Caco-2 (cell line): ENCODE measurements at regions of chr12 and their contacts with region 1.

Region 1: GRCh38 chr12:47307680-47308399 is 228.1 kb upstream of the AMIGO2 start:
- DNase-seq: peak; percentile 67 to 71
- H3K4me3 ChIP-seq: no peak overlapping the region
- H3K4me3 Mint-ChIP-seq: no peak overlapping the region
- H3K27ac Mint-ChIP-seq: no peak overlapping the region
- H3K4me1 ChIP-seq: peaks cover 7% of the 10 kb centered on the region
- H3K4me1 Mint-ChIP-seq: peaks cover 23% of the 10 kb centered on the region
- H3K27me3 ChIP-seq: no peaks in the 10 kb centered on the region
- H3K27me3 Mint-ChIP-seq: no peaks in the 10 kb centered on the region
- CTCF ChIP-seq: peak; percentile 71 to 81

Region 2: GRCh38 chr12:46921048-46921763 is 386.6 kb before region 1 on chr12:
- CTCF ChIA-PET with region 1: no interaction called
- POLR2A ChIA-PET with region 1: no interaction called
- intact Hi-C with region 1: no loop called
- DNase-seq: no peak
- H3K4me3 ChIP-seq: no peak overlapping the region
- H3K4me3 Mint-ChIP-seq: no peak overlapping the region
- H3K27ac Mint-ChIP-seq: no peak overlapping the region
- H3K4me1 ChIP-seq: 0 out of 2 replicates have a peak, but pooled peaks cover 5% of the 10 kb centered on the region
- H3K4me1 Mint-ChIP-seq: no peaks in the 10 kb centered on the region
- H3K27me3 ChIP-seq: no peaks in the 10 kb centered on the region
- H3K27me3 Mint-ChIP-seq: peaks cover 5% of the 10 kb centered on the region
- CTCF ChIP-seq: no peak

Region 3: GRCh38 chr12:47079468-47079980 is 228.3 kb before region 1 on chr12 and contains the starts of genes AMIGO2 and PCED1B:
- CTCF ChIA-PET with region 1: interaction called, 13 read pairs
- POLR2A ChIA-PET with region 1: no interaction called
- intact Hi-C with region 1: loop called (anchors 1 kb)
- DNase-seq: peak; percentile 78 to 85
- H3K4me3 ChIP-seq: peak within 1 kb of the TSS; percentile 72
- H3K4me3 Mint-ChIP-seq: peak within 1 kb of the TSS; percentile 82
- H3K27ac Mint-ChIP-seq: peak within 1 kb of the TSS; percentile 27
- H3K4me1 ChIP-seq: peaks cover 8% of the 10 kb centered on the region; the same call in 1 of the 2 replicates
- H3K4me1 Mint-ChIP-seq: peaks cover 35% of the 10 kb centered on the region
- H3K27me3 ChIP-seq: peaks cover 1% of the 10 kb centered on the region; the same call in 1 of the 2 replicates
- H3K27me3 Mint-ChIP-seq: peaks cover 7% of the 10 kb centered on the region
- CTCF ChIP-seq: peak in 1 of 2 experiments; percentile 66
- total RNA-seq, gene AMIGO2: 1.6 and 1.9 TPM in 2 replicates
- total RNA-seq, gene PCED1B: 7.0 and 7.8 TPM in 2 replicates

Region 4: GRCh38 chr12:47105704-47106667 is 201.9 kb before region 1 on chr12:
- CTCF ChIA-PET with region 1: no interaction called
- POLR2A ChIA-PET with region 1: no interaction called
- intact Hi-C with region 1: no loop called
- DNase-seq: no peak
- H3K4me3 ChIP-seq: no peak overlapping the region
- H3K4me3 Mint-ChIP-seq: no peak overlapping the region
- H3K27ac Mint-ChIP-seq: no peak overlapping the region
- H3K4me1 ChIP-seq: no peaks in the 10 kb centered on the region
- H3K4me1 Mint-ChIP-seq: no peaks in the 10 kb centered on the region
- H3K27me3 ChIP-seq: no peaks in the 10 kb centered on the region
- H3K27me3 Mint-ChIP-seq: no peaks in the 10 kb centered on the region
- CTCF ChIP-seq: no peak

Region 5: GRCh38 chr12:47190271-47190750 is 117.5 kb before region 1 on chr12:
- CTCF ChIA-PET with region 1: no interaction called
- POLR2A ChIA-PET with region 1: no interaction called
- intact Hi-C with region 1: loop called (anchors 5 kb)
- DNase-seq: no peak
- H3K4me3 ChIP-seq: no peak overlapping the region
- H3K4me3 Mint-ChIP-seq: no peak overlapping the region
- H3K27ac Mint-ChIP-seq: no peak overlapping the region
- H3K4me1 ChIP-seq: peaks cover 22% of the 10 kb centered on the region
- H3K4me1 Mint-ChIP-seq: peaks cover 19% of the 10 kb centered on the region
- H3K27me3 ChIP-seq: no peaks in the 10 kb centered on the region
- H3K27me3 Mint-ChIP-seq: no peaks in the 10 kb centered on the region
- CTCF ChIP-seq: no peak

Region 6: GRCh38 chr12:47231456-47231855 is 76.4 kb before region 1 on chr12:
- CTCF ChIA-PET with region 1: interaction called, 3 read pairs
- POLR2A ChIA-PET with region 1: no interaction called
- intact Hi-C with region 1: loop called (anchors 1 kb)
- DNase-seq: peak; percentile 78 to 82
- H3K4me3 ChIP-seq: no peak overlapping the region
- H3K4me3 Mint-ChIP-seq: peak overlapping the region; percentile 52
- H3K27ac Mint-ChIP-seq: peak overlapping the region; percentile 55
- H3K4me1 ChIP-seq: peaks cover 57% of the 10 kb centered on the region
- H3K4me1 Mint-ChIP-seq: peaks cover 21% of the 10 kb centered on the region
- H3K27me3 ChIP-seq: no peaks in the 10 kb centered on the region; the same call in 1 of the 2 replicates
- H3K27me3 Mint-ChIP-seq: no peaks in the 10 kb centered on the region
- CTCF ChIP-seq: no peak

Region 7: GRCh38 chr12:47346251-47347019 is 38.6 kb after region 1 on chr12:
- CTCF ChIA-PET with region 1: no interaction called
- POLR2A ChIA-PET with region 1: no interaction called
- intact Hi-C with region 1: loop called (anchors 2 kb)
- DNase-seq: peak; percentile 84 to 87
- H3K4me3 ChIP-seq: no peak overlapping the region
- H3K4me3 Mint-ChIP-seq: no peak overlapping the region
- H3K27ac Mint-ChIP-seq: peak overlapping the region; percentile 42
- H3K4me1 ChIP-seq: peaks cover 12% of the 10 kb centered on the region
- H3K4me1 Mint-ChIP-seq: peaks cover 9% of the 10 kb centered on the region
- H3K27me3 ChIP-seq: no peaks in the 10 kb centered on the region
- H3K27me3 Mint-ChIP-seq: no peaks in the 10 kb centered on the region
- CTCF ChIP-seq: no peak

Region 8: DNA sequence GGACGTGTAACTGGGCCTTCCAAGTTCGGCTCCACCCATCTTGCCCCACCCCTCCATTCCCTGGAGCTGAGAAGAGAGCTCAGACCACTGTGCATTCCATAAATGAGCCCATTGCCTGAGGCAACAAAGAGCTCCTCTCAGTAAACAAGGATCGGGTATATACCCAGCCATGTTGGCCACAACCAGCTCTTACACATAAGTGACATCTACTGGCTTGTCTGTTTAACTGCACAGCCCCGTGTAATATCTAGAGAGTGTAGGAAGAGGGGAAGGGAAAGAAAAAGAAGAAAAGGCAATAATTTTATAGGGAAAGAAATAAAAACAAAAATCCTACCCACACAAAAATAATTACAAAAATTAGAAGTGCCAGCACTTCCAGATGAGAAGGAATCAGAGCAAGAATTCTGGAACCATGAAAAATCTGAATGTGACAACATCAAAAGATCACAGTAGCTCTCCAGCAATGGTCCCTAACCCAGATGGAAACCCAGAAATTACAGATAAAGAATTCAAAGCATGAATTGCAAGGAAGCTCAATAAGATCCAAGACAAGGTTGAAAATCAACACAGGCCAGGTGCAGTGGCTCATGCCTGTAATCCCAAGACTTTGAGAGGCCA is 89.9 kb after region 1 on chr12:
- CTCF ChIA-PET with region 1: interaction called, 5 read pairs
- POLR2A ChIA-PET with region 1: no interaction called
- intact Hi-C with region 1: loop called (anchors 1 kb)
- DNase-seq: peak; percentile 66 to 74
- H3K4me3 ChIP-seq: no peak overlapping the region
- H3K4me3 Mint-ChIP-seq: no peak overlapping the region
- H3K27ac Mint-ChIP-seq: no peak overlapping the region
- H3K4me1 ChIP-seq: peaks cover 9% of the 10 kb centered on the region; the same call in 1 of the 2 replicates
- H3K4me1 Mint-ChIP-seq: no peaks in the 10 kb centered on the region
- H3K27me3 ChIP-seq: no peaks in the 10 kb centered on the region
- H3K27me3 Mint-ChIP-seq: no peaks in the 10 kb centered on the region
- CTCF ChIP-seq: peak; percentile 43 to 51